Mammary epithelial cell (primary cell): ENCODE measurements at regions of chrX and their contacts with region 1.

Region 1: DNA sequence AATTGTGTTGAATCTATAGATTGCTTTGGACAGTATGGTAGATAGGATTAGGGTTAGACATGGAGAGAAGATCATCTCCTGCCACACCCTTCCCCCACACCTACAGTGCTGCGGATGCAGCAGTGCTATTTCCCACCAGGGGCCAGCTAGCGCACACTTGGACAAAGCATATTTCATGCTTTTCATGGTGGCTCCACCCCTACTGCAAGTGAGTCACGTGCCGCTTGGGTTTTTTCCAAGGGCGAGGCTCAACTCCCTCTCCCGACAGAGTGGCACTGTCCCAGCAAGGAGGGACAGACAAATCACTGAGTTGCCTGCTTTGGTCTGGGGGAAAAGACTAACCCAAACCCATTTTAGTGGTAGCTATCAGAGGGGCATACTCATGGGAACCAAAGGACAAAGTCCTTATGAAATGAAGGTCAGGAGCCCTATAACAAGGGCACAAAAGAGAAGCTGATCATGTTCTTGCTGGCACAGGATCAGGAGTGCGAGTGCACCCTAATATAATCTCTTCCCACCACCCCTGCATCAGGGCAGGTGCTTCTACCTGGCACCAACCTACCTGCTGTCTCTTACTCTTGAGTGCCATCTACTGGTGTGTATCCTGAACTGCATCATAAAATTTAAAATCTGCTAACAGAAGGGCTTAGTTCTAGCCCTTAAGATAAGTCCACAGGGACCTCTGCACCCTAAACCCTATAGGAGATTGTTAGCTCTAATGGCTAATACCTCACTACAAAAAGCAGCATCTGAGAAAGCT is 55.1 kb upstream of the PGAM4 start:
- DNase-seq: peak; percentile 23
- H3K4me3 ChIP-seq: no peak overlapping the region
- H3K27ac ChIP-seq: no peak overlapping the region
- H3K4me1 ChIP-seq: no peaks in the 10 kb centered on the region
- H3K27me3 ChIP-seq: no peaks in the 10 kb centered on the region
- CTCF ChIP-seq: peak; percentile 69 to 73

Region 2: GRCh38 chrX:76555814-76556213 is 1468.7 kb before region 1 on chrX:
- CTCF ChIA-PET with region 1: no interaction called
- dilution Hi-C with region 1: no loop called
- in situ Hi-C with region 1: no loop called
- intact Hi-C with region 1: loop called (anchors 5 kb)
- DNase-seq: peak; percentile 12
- H3K4me3 ChIP-seq: no peak overlapping the region
- H3K27ac ChIP-seq: no peak overlapping the region
- H3K4me1 ChIP-seq: no peaks in the 10 kb centered on the region
- H3K27me3 ChIP-seq: no peaks in the 10 kb centered on the region
- CTCF ChIP-seq: peak; percentile 24 to 28

Region 3: DNA sequence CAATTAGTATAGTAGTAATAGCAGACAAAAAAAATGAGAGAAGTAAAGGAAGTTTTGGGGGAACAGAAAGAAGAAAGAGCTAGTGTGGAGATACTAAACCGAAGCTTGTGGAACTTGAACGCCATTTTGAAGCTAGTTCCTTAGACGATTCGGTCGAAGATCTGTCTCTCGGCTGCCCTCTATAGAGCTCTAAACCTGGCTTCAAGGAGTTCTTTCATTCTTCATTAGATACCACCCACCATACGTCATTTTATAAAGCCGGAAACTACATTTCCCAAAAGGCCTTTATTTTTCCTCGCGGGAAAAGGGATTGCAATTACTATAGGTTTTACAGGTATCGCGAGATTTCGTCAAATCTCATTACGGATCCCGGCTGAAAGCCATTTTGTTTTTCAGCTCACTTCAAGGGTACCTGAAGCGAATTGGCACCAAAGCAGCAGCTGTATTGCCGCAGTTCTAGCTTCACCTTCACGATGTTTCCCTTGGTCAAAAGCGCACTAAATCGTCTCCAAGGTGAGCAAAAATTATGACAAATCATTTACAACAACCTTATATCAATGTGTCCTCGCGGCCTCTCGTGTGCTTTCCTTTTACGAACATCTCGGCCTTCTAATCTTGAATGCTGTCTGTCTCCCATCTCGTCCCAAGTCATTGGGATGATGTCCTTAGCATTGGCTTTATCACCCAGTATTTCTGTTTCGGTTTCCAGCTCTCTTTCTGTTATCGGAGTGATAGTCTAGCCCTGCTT is 125.3 kb before region 1 on chrX and contains the start of gene COX7B:
- CTCF ChIA-PET with region 1: no interaction called
- dilution Hi-C with region 1: no loop called
- in situ Hi-C with region 1: no loop called
- intact Hi-C with region 1: loop called (anchors 5 kb)
- DNase-seq: peak; percentile 91
- H3K4me3 ChIP-seq: peak within 1 kb of the TSS; percentile 44 to 69 (median 55)
- H3K27ac ChIP-seq: peak within 1 kb of the TSS; percentile 85
- H3K4me1 ChIP-seq: no peaks in the 10 kb centered on the region
- H3K27me3 ChIP-seq: no peaks in the 10 kb centered on the region
- CTCF ChIP-seq: peak; percentile 27 to 46
- total RNA-seq, gene COX7B: 190 to 194 TPM

Region 4: DNA sequence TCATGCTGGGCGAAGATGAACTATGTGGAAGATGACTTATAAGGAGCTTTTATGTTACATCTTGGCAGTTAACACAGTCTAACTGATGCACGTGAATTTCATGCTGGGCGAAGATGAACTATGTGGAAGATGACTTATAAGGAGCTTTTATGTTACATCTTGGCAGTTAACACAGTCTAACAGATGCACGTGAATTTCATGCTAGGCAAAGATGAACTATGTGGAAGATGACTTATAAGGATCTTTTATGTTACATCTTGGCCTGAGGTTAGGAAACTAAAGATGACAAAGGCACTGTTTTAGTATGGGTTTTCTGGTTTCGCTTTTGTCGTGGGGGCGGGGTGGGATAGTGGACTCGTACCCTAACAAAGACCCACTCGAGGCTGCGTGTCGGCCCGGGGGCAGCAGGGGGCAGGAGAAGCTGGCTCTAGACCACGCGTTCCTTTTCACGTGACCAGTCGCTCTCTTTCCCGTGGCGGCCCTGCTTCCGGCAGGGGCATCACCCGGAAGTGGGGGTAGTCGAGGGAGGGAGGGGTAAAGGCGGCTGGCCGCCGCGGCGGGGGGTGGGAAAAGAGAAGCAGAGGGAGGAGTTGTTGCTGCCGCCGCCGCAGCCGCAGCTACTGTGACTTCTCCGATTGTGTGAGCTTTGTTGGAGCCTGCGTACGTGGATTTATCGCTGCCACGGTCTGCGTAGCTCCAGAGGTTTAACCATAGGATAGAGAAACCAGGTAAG is 114.3 kb before region 1 on chrX and contains the start of gene ATP7A:
- CTCF ChIA-PET with region 1: no interaction called
- dilution Hi-C with region 1: no loop called
- in situ Hi-C with region 1: loop called in 1 of 2 experiments (anchors 5 kb)
- intact Hi-C with region 1: loop called (anchors 1 kb)
- DNase-seq: peak; percentile 74
- H3K4me3 ChIP-seq: peak within 1 kb of the TSS; percentile 51 to 60 (median 55)
- H3K27ac ChIP-seq: peak within 1 kb of the TSS; percentile 44
- H3K4me1 ChIP-seq: no peaks in the 10 kb centered on the region
- H3K27me3 ChIP-seq: no peaks in the 10 kb centered on the region
- CTCF ChIP-seq: peak; percentile 23 to 57
- total RNA-seq, gene ATP7A: 5.5 to 8.3 TPM

Region 5: DNA sequence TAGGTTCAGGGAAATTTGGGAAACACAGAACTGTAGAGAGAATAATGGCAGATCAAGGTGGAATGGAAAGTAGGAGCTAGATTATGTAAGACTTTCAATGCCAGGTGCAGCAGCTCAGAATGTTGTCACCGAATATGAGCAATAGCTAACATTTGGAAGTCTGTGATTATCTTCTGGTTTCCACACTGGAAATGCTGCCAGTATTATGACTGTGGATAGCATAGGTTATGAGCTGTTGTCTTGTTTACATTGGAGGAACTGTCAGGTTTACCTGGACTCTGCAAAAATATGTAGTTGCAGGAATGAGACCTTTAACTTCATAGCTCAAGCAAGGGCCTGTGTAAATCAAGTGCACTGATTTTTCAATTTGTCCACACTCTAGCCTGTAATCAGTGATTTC is 140.9 kb after region 1 on chrX:
- CTCF ChIA-PET with region 1: no interaction called
- dilution Hi-C with region 1: no loop called
- in situ Hi-C with region 1: no loop called
- intact Hi-C with region 1: no loop called
- DNase-seq: no peak
- H3K4me3 ChIP-seq: no peak overlapping the region
- H3K27ac ChIP-seq: no peak overlapping the region
- H3K4me1 ChIP-seq: no peaks in the 10 kb centered on the region
- H3K27me3 ChIP-seq: no peaks in the 10 kb centered on the region
- CTCF ChIP-seq: no peak